ENCODE measurements at regions of chr21 and their contacts with region 1.

Region 1: GRCh38 chr21:42009831-42010523 is at the start of gene ZBTB21:
- DNase-seq: peak; percentile 99
- ATAC-seq: peak; percentile 90
- H3K4me3 Mint-ChIP-seq: peak within 1 kb of the TSS; percentile 93
- H3K27ac Mint-ChIP-seq: peak within 1 kb of the TSS; percentile 99
- H3K4me1 Mint-ChIP-seq: peaks cover 27% of the 10 kb centered on the region
- H3K27me3 Mint-ChIP-seq: no peaks in the 10 kb centered on the region
- total RNA-seq, gene ZBTB21: 30.7 to 32.9 TPM

Region 2: GRCh38 chr21:41768437-41769061 is 241.4 kb before region 1 on chr21:
- CTCF ChIA-PET with region 1: no interaction called
- POLR2A ChIA-PET with region 1: no interaction called
- intact Hi-C with region 1: loop called in 1 of 2 experiments (anchors 2 kb)
- DNase-seq: peak; percentile 46
- ATAC-seq: peak; percentile 62
- H3K4me3 Mint-ChIP-seq: peak overlapping the region; percentile 66
- H3K27ac Mint-ChIP-seq: no peak overlapping the region
- H3K4me1 Mint-ChIP-seq: peaks cover 25% of the 10 kb centered on the region
- H3K27me3 Mint-ChIP-seq: peaks cover 52% of the 10 kb centered on the region

Region 3: DNA sequence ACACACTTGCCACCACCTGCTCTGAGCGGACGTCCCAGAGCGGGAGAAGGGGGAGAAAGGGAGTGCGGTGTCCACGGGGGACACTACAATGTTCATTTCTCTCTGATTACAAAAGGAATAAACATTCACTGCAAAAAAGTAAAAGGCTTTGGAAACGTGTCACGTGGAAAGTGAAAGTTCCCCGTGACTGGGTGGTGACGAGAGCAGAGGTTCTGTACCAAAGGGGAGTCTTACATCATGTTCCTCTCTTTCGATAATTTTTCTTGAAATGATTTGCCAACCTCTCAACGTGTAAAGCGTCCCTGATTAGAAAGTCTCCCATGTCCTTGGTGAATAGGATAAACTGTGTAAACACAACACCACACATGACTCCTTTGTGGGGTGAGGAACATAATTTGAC is 108.9 kb before region 1 on chr21:
- CTCF ChIA-PET with region 1: interaction called, 3 read pairs
- POLR2A ChIA-PET with region 1: no interaction called
- intact Hi-C with region 1: loop called (anchors 1 to 5 kb)
- DNase-seq: peak; percentile 79
- ATAC-seq: peak; percentile 74
- H3K4me3 Mint-ChIP-seq: peak overlapping the region; percentile 32
- H3K27ac Mint-ChIP-seq: peak overlapping the region; percentile 95
- H3K4me1 Mint-ChIP-seq: peaks cover 35% of the 10 kb centered on the region
- H3K27me3 Mint-ChIP-seq: no peaks in the 10 kb centered on the region

Region 4: DNA sequence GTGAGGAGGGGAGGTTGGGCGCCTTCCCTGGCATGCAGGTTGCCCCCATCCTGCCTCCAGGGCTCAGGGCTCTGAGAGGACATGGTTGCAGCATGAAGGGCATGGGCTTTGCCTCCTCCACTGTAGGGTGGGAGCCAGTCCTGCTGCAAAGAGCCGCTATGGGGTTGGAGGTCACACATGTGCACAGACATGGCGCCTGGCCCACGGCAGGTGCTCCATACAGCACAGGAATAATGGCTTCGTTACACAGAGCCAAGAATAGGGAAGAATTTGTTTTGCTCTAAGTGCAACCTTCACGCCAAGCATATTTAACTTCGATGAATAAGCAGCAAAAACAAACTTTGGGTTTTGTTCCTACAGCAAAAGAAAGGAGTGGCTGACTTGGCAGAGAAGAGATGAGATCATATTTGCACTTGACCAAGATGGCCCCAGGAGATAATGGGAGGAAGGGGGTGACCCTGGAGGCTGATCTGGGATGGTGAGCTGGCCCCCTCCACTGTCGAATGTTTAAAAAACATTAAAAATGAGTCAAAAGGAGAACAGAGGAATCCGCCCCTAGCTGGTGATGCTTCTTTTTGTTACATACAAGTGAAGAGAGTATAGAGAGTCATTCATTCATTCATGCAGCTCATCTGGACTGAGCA is 43.8 kb before region 1 on chr21:
- CTCF ChIA-PET with region 1: no interaction called
- POLR2A ChIA-PET with region 1: no interaction called
- intact Hi-C with region 1: no loop called
- DNase-seq: no peak
- ATAC-seq: no peak
- H3K4me3 Mint-ChIP-seq: no peak overlapping the region
- H3K27ac Mint-ChIP-seq: no peak overlapping the region
- H3K4me1 Mint-ChIP-seq: no peaks in the 10 kb centered on the region
- H3K27me3 Mint-ChIP-seq: peaks cover 3% of the 10 kb centered on the region

Region 5: DNA sequence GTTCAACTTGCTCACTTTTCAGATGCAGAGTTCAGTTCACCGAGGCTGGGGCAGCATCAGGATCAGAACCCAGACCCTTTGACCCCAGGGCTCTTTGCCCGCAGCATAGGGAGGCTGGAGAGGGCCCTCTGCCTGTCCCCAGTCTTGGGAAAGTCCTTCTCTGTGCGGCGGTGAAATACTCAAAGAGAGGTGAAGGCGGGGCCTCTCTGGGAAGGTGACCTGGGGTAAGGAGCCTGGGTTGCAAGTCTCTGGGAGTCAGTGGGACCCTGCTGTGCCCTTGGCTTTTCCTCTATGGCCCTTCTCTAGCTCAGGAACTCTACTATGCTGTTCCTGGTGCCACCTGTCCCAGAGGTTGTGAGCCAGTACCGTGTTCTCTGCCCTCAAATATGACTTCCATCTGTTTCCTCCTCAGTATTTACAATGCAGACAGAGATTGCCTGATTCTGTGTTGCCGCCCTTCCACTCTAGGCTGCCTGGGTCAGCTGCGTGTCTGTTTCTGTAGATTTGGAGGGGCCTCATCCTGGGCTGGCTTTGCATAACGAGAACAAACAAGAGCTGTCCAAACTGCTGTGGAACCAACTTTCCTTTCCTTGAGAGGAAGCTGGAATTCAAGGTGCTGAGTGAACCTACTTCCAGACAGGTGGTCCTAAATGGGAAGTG is 18.9 kb after region 1 on chr21:
- CTCF ChIA-PET with region 1: no interaction called
- POLR2A ChIA-PET with region 1: no interaction called
- intact Hi-C with region 1: no loop called
- DNase-seq: no peak
- ATAC-seq: no peak
- H3K4me3 Mint-ChIP-seq: no peak overlapping the region
- H3K27ac Mint-ChIP-seq: no peak overlapping the region
- H3K4me1 Mint-ChIP-seq: no peaks in the 10 kb centered on the region
- H3K27me3 Mint-ChIP-seq: peaks cover 3% of the 10 kb centered on the region

Region 6: GRCh38 chr21:42062236-42063022 is 52.5 kb after region 1 on chr21:
- CTCF ChIA-PET with region 1: interaction called, 3 read pairs
- POLR2A ChIA-PET with region 1: interaction called, 3 read pairs
- intact Hi-C with region 1: loop called (anchors 1 kb)
- DNase-seq: peak; percentile 86
- ATAC-seq: peak; percentile 65
- H3K4me3 Mint-ChIP-seq: peak overlapping the region; percentile 60
- H3K27ac Mint-ChIP-seq: peak overlapping the region; percentile 86
- H3K4me1 Mint-ChIP-seq: peaks cover 43% of the 10 kb centered on the region
- H3K27me3 Mint-ChIP-seq: no peaks in the 10 kb centered on the region

Region 7: DNA sequence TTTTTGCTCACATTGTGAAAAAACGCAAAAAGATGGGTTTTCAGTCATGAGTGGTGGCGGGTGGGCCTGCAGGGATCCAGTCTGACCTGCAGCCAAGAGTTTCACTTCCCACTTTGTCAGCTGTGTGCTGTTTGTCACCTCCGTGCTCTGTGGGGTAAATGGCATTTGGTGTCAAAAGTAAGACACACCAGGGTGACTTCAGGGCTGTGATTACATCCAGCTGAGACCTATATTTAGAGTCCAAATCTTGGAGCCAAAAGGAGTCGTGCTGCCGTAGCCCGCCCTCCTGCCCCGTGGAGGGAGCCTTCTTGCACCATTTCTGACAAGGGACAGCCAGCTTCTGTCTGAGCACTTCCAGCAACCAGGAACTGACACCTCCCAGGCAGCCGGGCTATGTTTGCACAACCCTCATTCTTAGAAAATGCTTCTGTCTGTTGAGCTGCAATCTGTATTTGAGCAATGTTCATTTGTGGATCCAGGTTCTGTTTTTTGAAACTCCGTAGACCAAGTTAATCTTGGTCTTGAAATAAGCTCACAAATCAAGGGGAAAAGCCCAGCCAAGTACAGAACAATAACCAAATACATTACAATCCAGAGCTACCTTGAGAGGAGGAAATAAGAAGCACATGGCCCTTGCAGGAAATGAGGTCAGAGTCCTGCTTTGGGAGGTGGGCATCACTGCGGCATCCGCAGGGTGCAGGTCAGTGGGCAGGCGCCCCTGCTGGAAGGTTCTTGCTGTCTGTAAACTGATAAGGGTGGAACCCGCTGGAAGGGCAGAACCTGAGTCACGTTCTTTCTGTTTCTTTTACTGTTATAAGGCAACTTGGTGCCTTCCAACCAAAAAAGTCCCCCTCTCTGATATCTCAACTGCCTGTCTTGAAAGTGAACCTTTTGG is 223.3 kb after region 1 on chr21:
- CTCF ChIA-PET with region 1: interaction called, 3 read pairs
- POLR2A ChIA-PET with region 1: interaction called, 3 read pairs
- intact Hi-C with region 1: loop called (anchors 1 to 10 kb)
- DNase-seq: peak; percentile 93
- ATAC-seq: peak; percentile 69
- H3K4me3 Mint-ChIP-seq: peak overlapping the region; percentile 68
- H3K27ac Mint-ChIP-seq: peak overlapping the region; percentile 97
- H3K4me1 Mint-ChIP-seq: peaks cover 95% of the 10 kb centered on the region
- H3K27me3 Mint-ChIP-seq: no peaks in the 10 kb centered on the region